ENCODE measurements at regions of chr9 and their contacts with region 1.

Region 1: GRCh38 chr9:19925817-19926503 is 137.1 kb upstream of the SLC24A2 start:
- DNase-seq: peak; percentile 35 to 72
- ATAC-seq: peak; percentile 84 to 96 (median 94)
- H3K4me3 ChIP-seq: peak overlapping the region in 9 of 10 donors; percentile 2 to 51 (median 45)
- H3K27ac ChIP-seq: no peak overlapping the region
- H3K4me1 ChIP-seq: peaks cover 0 to 11% (median 6%) of the 10 kb centered on the region in 9 donors
- H3K27me3 ChIP-seq: peaks cover 0 to 12% (median 0%) of the 10 kb centered on the region in 7 donors
- CTCF ChIP-seq: peak; percentile 92 to 99 (median 97)

Region 2: DNA sequence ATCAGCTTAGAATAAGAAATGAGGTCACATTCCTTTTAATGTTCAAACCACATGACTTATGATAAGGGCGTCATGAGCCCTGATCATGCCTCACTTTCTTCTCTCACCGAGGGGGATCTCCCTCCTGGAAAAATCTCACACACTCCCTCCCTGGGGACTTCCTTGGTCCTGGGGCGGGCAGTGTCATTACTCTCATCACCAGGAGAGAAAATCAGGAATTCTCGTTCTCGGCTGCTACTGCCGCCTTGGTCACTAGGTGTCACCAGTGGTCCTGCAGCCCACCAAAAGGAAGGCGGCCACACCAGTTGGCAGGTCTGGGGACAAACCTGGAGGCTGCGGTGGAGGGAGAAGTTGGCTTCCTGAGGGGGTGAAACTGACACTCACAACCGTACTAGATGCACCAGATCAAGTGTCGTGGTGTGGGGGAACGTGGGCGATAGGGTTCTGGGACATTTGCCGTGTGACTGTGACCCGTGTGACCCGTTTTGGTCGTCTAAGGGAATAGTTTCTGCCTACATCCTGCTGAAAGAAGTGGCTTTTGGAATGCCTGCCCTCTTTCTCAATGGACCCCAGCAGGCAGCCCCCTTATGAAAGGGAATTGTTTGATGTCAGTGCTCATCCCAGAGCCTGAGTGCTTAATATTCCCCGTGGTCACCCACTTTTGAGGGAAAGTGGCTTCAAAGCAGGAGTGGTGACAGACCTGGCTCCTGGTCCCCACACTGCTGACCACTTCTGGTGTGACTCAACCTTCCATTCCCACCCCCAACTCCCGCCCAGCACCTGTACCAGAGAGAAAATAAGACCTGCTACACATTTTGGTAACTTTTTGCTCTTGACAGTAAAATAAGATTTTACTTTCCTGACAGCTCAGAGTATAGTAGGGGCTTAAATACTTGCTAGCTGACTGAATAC is 454.0 kb before region 1 on chr9:
- intact Hi-C with region 1: loop called in 4 of 10 experiments (anchors 2 to 10 kb)
- DNase-seq: peak; percentile 54 to 57
- ATAC-seq: peak; percentile 49 to 82 (median 68)
- H3K4me3 ChIP-seq: peak overlapping the region in 6 of 10 donors; percentile 6 to 30 (median 26)
- H3K27ac ChIP-seq: peak overlapping the region in 3 of 10 donors; percentile 6 to 16 (median 12)
- H3K4me1 ChIP-seq: peaks cover 0 to 17% (median 11%) of the 10 kb centered on the region in 9 donors
- H3K27me3 ChIP-seq: no peaks in the 10 kb centered on the region
- CTCF ChIP-seq: peak; percentile 70 to 89 (median 74)

Region 3: DNA sequence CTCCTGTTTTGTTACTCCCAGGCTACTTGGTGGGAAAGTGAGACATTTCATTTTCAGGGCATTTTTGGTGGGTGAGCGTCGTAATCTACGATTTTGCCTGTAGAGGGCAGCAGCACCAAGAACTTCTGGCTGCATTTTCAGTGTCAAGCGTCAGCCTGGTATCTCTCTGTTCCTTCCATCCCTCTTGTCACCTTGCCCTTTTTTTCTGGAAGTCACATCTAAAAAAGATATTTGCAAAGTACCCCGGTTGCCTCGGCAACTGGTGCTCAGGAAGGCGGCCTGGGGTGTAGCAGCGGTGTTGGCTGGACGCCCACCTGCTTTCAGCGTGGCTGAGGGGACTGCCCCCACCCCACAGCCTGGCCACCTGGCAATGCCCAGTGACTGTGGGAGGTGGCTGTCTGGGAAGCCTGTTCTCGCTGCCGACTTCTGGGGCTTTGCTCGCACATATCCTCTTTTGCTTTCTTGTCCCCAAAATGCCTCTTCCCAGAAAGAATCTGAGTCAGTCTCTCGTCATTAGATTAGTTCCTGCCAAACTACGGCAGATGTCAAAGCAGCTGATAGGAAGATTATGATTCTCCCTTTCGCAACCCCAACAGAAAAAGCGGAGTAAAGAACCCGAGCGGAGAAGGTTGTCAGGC is 432.7 kb before region 1 on chr9:
- intact Hi-C with region 1: loop called in 3 of 10 experiments (anchors 5 to 10 kb)
- DNase-seq: peak; percentile 73 to 79
- ATAC-seq: peak; percentile 79 to 94 (median 82)
- H3K4me3 ChIP-seq: peak overlapping the region in 7 of 10 donors; percentile 13 to 45 (median 33)
- H3K27ac ChIP-seq: peak overlapping the region in 8 of 10 donors; percentile 18 to 72 (median 57)
- H3K4me1 ChIP-seq: peaks cover 0 to 20% (median 11%) of the 10 kb centered on the region in 9 donors
- H3K27me3 ChIP-seq: peaks cover 0 to 9% (median 0%) of the 10 kb centered on the region in 7 donors
- CTCF ChIP-seq: peak; percentile 56 to 83 (median 73)

Region 4: GRCh38 chr9:19782005-19782404 is 144.0 kb before region 1 on chr9:
- intact Hi-C with region 1: no loop called
- DNase-seq: no peak
- ATAC-seq: peak in 1 of 8 donors; percentile 44
- H3K4me3 ChIP-seq: no peak overlapping the region
- H3K27ac ChIP-seq: no peak overlapping the region
- H3K4me1 ChIP-seq: no peaks in the 10 kb centered on the region
- H3K27me3 ChIP-seq: peaks cover 0 to 25% (median 4%) of the 10 kb centered on the region in 7 donors
- CTCF ChIP-seq: no peak

Region 5: DNA sequence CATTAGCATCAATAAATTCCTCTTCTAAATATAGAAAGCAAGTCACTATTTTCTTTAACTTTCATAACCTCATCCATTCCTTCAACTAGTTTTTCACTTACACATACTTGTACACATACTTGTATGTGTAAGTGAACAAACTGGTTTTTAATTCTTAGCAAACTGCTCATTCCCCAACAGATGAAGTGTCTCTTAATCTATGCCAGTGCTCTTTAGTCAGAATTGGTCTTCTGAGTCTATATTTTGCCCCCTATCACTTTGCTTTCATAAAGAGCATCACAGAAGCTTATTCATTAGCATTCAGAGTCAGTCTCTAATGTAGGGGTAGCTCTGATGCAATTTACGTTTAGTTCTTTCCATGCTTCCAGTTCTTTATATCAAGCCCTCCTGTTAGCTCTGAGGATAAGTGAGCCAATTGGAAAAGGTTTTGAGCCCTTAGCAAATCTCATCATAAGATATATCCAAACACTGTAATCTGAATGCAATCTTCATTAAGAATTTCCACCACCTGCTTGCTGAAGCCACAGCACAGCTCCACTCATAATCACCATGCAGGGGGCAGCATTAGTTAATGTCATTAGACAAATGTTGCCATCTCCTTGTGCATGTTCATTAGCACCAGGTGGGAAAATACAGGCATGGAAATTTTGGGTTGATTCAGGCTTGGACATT is 41.4 kb after region 1 on chr9:
- intact Hi-C with region 1: no loop called
- DNase-seq: no peak
- ATAC-seq: no peak
- H3K4me3 ChIP-seq: no peak overlapping the region
- H3K27ac ChIP-seq: no peak overlapping the region
- H3K4me1 ChIP-seq: no peaks in the 10 kb centered on the region
- H3K27me3 ChIP-seq: peaks cover 0 to 5% (median 0%) of the 10 kb centered on the region in 7 donors
- CTCF ChIP-seq: peak in 3 of 9 donors; percentile 6 to 43 (median 24)

Region 6: GRCh38 chr9:20356403-20357035 is 430.6 kb after region 1 on chr9:
- intact Hi-C with region 1: loop called in 9 of 10 experiments (anchors 5 to 10 kb)
- DNase-seq: peak; percentile 46 to 79
- ATAC-seq: peak; percentile 77 to 95 (median 91)
- H3K4me3 ChIP-seq: peak overlapping the region in 7 of 10 donors; percentile 0 to 42 (median 33)
- H3K27ac ChIP-seq: peak overlapping the region in 9 of 10 donors; percentile 1 to 76 (median 55)
- H3K4me1 ChIP-seq: peaks cover 0 to 38% (median 17%) of the 10 kb centered on the region in 9 donors
- H3K27me3 ChIP-seq: no peaks in the 10 kb centered on the region
- CTCF ChIP-seq: peak; percentile 55 to 87 (median 69)

Region 7: GRCh38 chr9:20941174-20941690 is 1015.3 kb after region 1 on chr9:
- intact Hi-C with region 1: loop called in 9 of 10 experiments (anchors 2 to 10 kb)
- DNase-seq: peak; percentile 13 to 51
- ATAC-seq: peak; percentile 84 to 93 (median 91)
- H3K4me3 ChIP-seq: no peak overlapping the region
- H3K27ac ChIP-seq: no peak overlapping the region
- H3K4me1 ChIP-seq: peaks cover 0 to 8% (median 0%) of the 10 kb centered on the region in 9 donors
- H3K27me3 ChIP-seq: no peaks in the 10 kb centered on the region
- CTCF ChIP-seq: peak; percentile 53 to 94 (median 89)

Region 8: DNA sequence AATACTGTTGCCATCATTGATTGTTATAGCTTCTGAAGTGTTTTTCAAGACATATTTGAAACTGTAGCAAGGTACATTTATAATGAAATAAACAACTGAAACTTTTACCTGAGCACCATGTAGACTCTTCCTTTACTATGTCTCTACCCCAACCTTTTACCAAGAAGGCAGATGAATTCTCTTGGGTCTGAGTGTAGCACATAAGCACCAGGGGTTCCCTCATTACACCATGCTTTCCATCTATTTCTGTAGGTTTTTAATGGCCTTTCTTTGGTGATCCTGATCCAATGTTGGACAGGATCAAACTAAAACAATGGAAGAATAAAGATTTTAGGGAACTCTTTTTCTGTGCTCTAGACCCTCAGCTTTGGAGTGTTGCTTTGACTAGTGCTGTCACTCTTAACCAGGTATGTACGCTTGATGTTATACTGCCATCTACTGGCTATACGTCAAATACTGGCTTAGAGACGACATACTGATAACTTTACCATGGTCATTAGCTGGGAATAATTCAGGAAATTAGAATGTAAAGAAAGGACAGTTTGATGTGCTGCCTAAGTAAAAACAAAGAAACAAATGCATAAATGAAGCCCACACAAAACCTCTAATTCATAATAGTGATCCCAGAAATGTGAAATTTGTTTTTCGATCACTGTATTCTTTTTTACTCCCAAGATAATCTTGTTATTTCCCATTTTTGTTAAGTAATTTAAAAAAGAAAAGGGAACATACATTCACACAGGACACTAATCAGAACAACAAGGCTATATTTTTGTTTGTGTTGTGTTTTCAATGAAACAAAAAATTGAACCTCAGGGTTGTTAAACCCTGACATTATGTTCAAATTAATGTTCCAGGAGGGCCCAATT is 1185.0 kb after region 1 on chr9:
- intact Hi-C with region 1: loop called (anchors 1 to 10 kb)
- DNase-seq: peak in 1 of 2 donors; percentile 26
- ATAC-seq: peak in 7 of 8 donors; percentile 76 to 92 (median 88)
- H3K4me3 ChIP-seq: no peak overlapping the region
- H3K27ac ChIP-seq: no peak overlapping the region
- H3K4me1 ChIP-seq: no peaks in the 10 kb centered on the region
- H3K27me3 ChIP-seq: no peaks in the 10 kb centered on the region
- CTCF ChIP-seq: peak; percentile 74 to 92 (median 88)